Endothelial cell of umbilical vein (primary cell): ENCODE measurements at regions of chr17 and their contacts with region 1.

Region 1: GRCh38 chr17:1039511-1040215 is 42.7 kb downstream of the TIMM22 start:
- DNase-seq: peak; percentile 84
- H3K4me3 ChIP-seq: no peak overlapping the region
- H3K27ac ChIP-seq: peak overlapping the region; percentile 80
- H3K4me1 ChIP-seq: peaks cover 30% of the 10 kb centered on the region
- H3K27me3 ChIP-seq: no peaks in the 10 kb centered on the region
- CTCF ChIP-seq: no peak
- POLR2A ChIP-seq: no peak

Region 2: GRCh38 chr17:944266-944826 is 95.3 kb before region 1 on chr17:
- CTCF ChIA-PET with region 1: no interaction called
- POLR2A ChIA-PET with region 1: no interaction called
- dilution Hi-C with region 1: no loop called
- intact Hi-C with region 1: no loop called
- DNase-seq: no peak
- H3K4me3 ChIP-seq: no peak overlapping the region
- H3K27ac ChIP-seq: no peak overlapping the region
- H3K4me1 ChIP-seq: no peaks in the 10 kb centered on the region
- H3K27me3 ChIP-seq: no peaks in the 10 kb centered on the region
- CTCF ChIP-seq: no peak
- POLR2A ChIP-seq: no peak

Region 3: GRCh38 chr17:1005361-1005946 is 34.2 kb before region 1 on chr17:
- CTCF ChIA-PET with region 1: interaction called, 19 read pairs
- POLR2A ChIA-PET with region 1: interaction called, 4 read pairs
- dilution Hi-C with region 1: no loop called
- intact Hi-C with region 1: loop called (anchors 1 kb)
- DNase-seq: peak; percentile 93
- H3K4me3 ChIP-seq: no peak overlapping the region
- H3K27ac ChIP-seq: peak overlapping the region; percentile 75
- H3K4me1 ChIP-seq: peaks cover 62% of the 10 kb centered on the region
- H3K27me3 ChIP-seq: no peaks in the 10 kb centered on the region
- CTCF ChIP-seq: no peak
- POLR2A ChIP-seq: peak; percentile 51

Region 4: DNA sequence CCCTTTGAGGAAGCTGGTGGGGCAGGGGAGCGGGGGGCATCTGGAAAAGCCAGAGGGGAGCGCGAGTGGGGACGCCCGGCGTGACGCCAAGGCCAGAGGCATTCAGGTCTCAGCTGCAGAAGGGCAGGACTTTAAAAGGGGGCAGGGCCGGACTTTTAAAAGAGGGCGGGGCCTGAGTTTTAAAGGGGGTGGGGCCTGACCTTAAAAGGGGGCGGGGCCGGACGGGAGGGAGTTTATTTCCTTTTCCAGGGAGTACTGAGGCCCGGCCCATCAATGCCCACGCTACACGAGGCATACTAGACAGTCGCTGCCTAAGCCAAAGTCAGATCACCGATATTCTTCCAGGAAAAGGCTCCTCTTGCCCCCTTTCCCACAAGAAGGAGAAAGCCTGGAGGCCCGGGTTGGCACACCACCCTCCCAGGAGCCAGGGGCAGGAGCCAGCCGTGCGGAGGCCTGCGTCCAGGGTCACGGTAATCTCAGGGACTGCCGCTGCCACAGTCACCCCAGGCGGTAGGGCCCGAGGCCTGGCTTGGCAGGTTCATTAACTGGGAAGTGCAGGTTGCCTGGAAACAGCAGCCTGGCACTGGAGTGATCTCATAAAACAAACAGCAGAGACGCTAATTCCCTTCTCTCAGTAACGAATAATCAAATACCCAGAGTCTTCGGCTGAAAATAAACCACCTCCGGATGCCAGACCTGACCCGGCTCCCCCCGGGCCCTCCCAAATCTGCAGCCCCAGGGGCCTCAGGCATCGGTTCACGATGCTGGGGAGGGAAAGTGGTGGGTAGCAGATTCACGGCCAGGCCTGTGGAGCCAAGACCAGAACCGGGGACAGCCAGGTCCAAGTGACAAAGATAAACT is 47.9 kb after region 1 on chr17:
- CTCF ChIA-PET with region 1: no interaction called
- POLR2A ChIA-PET with region 1: no interaction called
- dilution Hi-C with region 1: no loop called
- intact Hi-C with region 1: no loop called
- DNase-seq: peak; percentile 84
- H3K4me3 ChIP-seq: peak overlapping the region in 1 of 3 experiments; percentile 9
- H3K27ac ChIP-seq: peak overlapping the region; percentile 95
- H3K4me1 ChIP-seq: peaks cover 25% of the 10 kb centered on the region
- H3K27me3 ChIP-seq: no peaks in the 10 kb centered on the region
- CTCF ChIP-seq: no peak
- POLR2A ChIP-seq: no peak

Region 5: DNA sequence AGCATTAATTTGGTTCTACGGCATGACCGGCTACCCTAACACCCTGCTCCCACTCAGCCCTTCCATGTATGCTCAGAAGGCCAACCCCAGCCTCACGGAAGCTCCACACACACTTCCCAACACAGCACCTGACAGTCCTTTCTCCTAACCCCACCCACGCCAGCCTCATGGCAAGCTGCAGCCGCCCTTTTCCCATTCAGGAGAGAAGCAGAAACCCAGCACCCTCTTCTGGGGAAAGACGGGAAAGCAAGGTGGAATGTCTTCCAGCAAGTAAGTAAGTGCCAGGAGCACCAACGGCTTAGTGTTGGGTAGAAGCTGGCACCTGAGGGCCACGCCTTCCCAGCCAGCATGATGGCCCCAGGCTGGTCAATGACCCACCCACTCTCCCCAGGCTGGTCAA is 108.0 kb after region 1 on chr17:
- CTCF ChIA-PET with region 1: no interaction called
- POLR2A ChIA-PET with region 1: no interaction called
- dilution Hi-C with region 1: no loop called
- intact Hi-C with region 1: no loop called
- DNase-seq: peak; percentile 80
- H3K4me3 ChIP-seq: no peak overlapping the region
- H3K27ac ChIP-seq: no peak overlapping the region
- H3K4me1 ChIP-seq: no peaks in the 10 kb centered on the region
- H3K27me3 ChIP-seq: no peaks in the 10 kb centered on the region
- CTCF ChIP-seq: peak; percentile 48 to 72
- POLR2A ChIP-seq: no peak